Natural killer cell (primary cell): ENCODE measurements at regions of chr9 and their contacts with region 1.

Region 1: DNA sequence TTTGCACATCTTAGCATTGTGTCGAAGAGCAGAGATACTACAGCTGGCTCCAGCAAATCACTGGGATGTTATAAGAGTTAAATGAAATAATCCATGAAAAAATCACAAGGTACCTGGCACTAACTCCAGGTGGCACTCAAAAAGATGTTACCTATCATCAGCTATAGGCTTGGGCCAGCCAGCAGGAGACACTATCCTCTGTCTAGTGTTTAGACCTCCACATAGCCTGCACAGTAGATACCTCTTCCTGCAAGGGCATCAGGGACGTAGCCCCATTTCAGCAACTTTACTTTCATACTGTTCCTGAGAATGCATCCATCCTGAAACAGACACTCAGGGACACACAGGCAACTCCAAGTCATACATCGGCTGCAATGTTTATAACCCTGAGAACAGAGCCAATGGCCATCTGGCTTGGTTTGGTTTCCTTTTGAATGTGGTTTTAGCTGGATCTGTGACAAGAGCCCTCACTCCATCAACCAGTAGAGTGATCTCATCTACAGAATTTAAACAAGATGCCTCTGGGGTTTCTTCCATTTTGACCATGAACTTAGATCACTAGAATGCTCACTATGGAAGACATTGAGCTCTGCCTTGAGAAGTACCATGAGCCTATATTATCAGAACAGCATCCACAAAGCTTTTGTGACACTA is 69.9 kb downstream of the TLE1 start:
- DNase-seq: no peak
- ATAC-seq: peak; percentile 33 to 67 (median 61)
- H3K4me3 ChIP-seq: no peak overlapping the region
- H3K4me3 Mint-ChIP-seq: peak overlapping the region; percentile 85
- H3K27ac ChIP-seq: peak overlapping the region; percentile 57
- H3K27ac Mint-ChIP-seq: peak overlapping the region; percentile 88 to 89
- H3K4me1 ChIP-seq: peaks cover 20% of the 10 kb centered on the region
- H3K4me1 Mint-ChIP-seq: peaks cover 53 to 57% of the 10 kb centered on the region in 2 donors
- H3K27me3 ChIP-seq: no peaks in the 10 kb centered on the region
- H3K27me3 Mint-ChIP-seq: no peaks in the 10 kb centered on the region
- CTCF ChIP-seq: no peak

Region 2: GRCh38 chr9:81596679-81597418 is 22.6 kb before region 1 on chr9:
- intact Hi-C with region 1: loop called (anchors 1 kb)
- DNase-seq: peak; percentile 31
- ATAC-seq: peak; percentile 81 to 90 (median 87)
- H3K4me3 ChIP-seq: no peak overlapping the region
- H3K4me3 Mint-ChIP-seq: peak overlapping the region; percentile 86
- H3K27ac ChIP-seq: peak overlapping the region; percentile 72
- H3K27ac Mint-ChIP-seq: peak overlapping the region; percentile 86 to 87
- H3K4me1 ChIP-seq: peaks cover 40% of the 10 kb centered on the region
- H3K4me1 Mint-ChIP-seq: peaks cover 53 to 70% of the 10 kb centered on the region in 2 donors
- H3K27me3 ChIP-seq: no peaks in the 10 kb centered on the region
- H3K27me3 Mint-ChIP-seq: no peaks in the 10 kb centered on the region
- CTCF ChIP-seq: no peak